ENCODE measurements at regions of chr5 and their contacts with region 1.

Region 1: GRCh38 chr5:157743163-157744050 is at the start of gene LSM11:
- DNase-seq: peak; percentile 87 to 94
- H3K4me3 ChIP-seq: peak within 1 kb of the TSS; percentile 91
- H3K4me3 Mint-ChIP-seq: peak within 1 kb of the TSS; percentile 83
- H3K27ac Mint-ChIP-seq: peak within 1 kb of the TSS; percentile 52
- H3K4me1 ChIP-seq: 0 out of 2 replicates have a peak, but pooled peaks cover 6% of the 10 kb centered on the region
- H3K4me1 Mint-ChIP-seq: peaks cover 8% of the 10 kb centered on the region
- H3K27me3 ChIP-seq: no peaks in the 10 kb centered on the region
- H3K27me3 Mint-ChIP-seq: no peaks in the 10 kb centered on the region
- CTCF ChIP-seq: peak; percentile 98 to 99
- total RNA-seq, gene LSM11: 6.8 and 7.7 TPM in 2 replicates

Region 2: DNA sequence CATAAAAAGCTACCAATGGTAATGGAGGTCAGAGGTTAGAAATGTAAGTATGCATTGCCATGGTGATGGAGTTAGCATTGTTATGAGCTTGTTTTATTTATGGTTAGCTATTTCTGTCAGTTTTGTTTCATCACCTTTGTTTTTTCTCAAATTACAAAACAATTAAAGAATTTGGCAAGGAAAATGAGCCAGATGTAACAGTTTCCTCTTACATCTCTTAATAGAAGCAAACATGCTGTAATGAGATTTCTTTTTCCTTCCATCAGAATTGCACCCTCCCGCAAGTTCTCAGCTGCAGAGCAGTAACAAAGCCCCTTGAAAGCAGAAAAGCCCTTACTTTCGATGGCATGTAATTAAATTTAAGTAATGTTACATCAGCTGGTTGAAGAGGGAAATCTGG is 1183.4 kb before region 1 on chr5:
- CTCF ChIA-PET with region 1: no interaction called
- POLR2A ChIA-PET with region 1: no interaction called
- intact Hi-C with region 1: no loop called
- DNase-seq: no peak
- H3K4me3 ChIP-seq: no peak overlapping the region
- H3K4me3 Mint-ChIP-seq: no peak overlapping the region
- H3K27ac Mint-ChIP-seq: no peak overlapping the region
- H3K4me1 ChIP-seq: no peaks in the 10 kb centered on the region
- H3K4me1 Mint-ChIP-seq: no peaks in the 10 kb centered on the region
- H3K27me3 ChIP-seq: no peaks in the 10 kb centered on the region
- H3K27me3 Mint-ChIP-seq: no peaks in the 10 kb centered on the region
- CTCF ChIP-seq: no peak

Region 3: DNA sequence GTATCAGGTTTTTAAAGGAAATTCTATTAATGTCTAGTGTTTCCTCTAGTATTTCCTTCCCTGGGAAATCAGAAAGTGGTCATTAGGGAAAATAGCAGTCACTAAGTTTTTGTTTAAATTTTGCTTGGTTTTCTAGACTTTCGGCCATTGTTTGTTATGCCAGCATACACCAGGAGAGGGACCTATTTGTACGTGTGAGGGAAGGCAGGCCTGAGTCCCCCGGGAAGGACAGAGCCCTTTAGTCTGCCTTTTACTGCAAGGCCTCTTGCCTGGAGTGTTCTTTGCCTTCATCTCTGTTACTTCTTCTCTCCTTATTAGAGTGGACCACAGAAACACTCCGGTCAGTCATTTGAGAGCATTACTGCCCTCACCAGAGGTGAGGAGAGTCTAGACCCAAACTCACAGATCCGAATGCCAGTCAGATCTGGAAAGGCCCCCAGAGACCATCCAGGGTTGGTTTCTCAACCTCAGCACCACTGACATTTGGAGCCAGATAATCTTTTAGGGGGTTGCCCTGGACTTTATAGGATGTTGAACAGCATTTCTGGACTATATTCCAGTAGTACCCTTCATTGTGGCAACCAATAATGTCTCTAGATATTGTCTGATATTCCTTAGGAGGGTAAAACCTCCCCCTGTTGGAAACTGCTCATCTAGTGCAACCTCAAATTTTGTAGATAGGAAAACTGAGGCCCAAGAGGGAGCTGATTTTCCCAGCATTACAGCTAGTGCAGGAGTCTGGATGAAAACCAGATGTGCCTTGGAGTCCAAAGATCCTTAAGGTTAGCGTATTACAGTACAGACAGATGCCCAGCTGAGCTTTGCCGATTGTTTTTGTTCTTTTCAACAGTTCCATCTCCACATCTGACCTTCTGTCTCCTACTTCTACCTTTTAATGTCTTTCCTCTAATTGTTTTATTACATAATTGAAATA is 376.4 kb before region 1 on chr5:
- CTCF ChIA-PET with region 1: no interaction called
- POLR2A ChIA-PET with region 1: no interaction called
- intact Hi-C with region 1: loop called (anchors 10 kb)
- DNase-seq: peak in 1 of 2 experiments; percentile 47
- H3K4me3 ChIP-seq: no peak overlapping the region
- H3K4me3 Mint-ChIP-seq: no peak overlapping the region
- H3K27ac Mint-ChIP-seq: no peak overlapping the region
- H3K4me1 ChIP-seq: no peaks in the 10 kb centered on the region; the same call in 1 of the 2 replicates
- H3K4me1 Mint-ChIP-seq: no peaks in the 10 kb centered on the region
- H3K27me3 ChIP-seq: no peaks in the 10 kb centered on the region
- H3K27me3 Mint-ChIP-seq: no peaks in the 10 kb centered on the region
- CTCF ChIP-seq: peak in 1 of 2 experiments; percentile 69

Region 4: GRCh38 chr5:157575381-157576020 is 167.9 kb before region 1 on chr5 and contains the start of gene ADAM19:
- CTCF ChIA-PET with region 1: no interaction called
- POLR2A ChIA-PET with region 1: no interaction called
- intact Hi-C with region 1: loop called (anchors 5 kb)
- DNase-seq: peak; percentile 62 to 80
- H3K4me3 ChIP-seq: peak within 1 kb of the TSS; percentile 75
- H3K4me3 Mint-ChIP-seq: peak within 1 kb of the TSS; percentile 92
- H3K27ac Mint-ChIP-seq: peak within 1 kb of the TSS; percentile 50
- H3K4me1 ChIP-seq: peaks cover 37% of the 10 kb centered on the region
- H3K4me1 Mint-ChIP-seq: peaks cover 48% of the 10 kb centered on the region
- H3K27me3 ChIP-seq: no peaks in the 10 kb centered on the region
- H3K27me3 Mint-ChIP-seq: no peaks in the 10 kb centered on the region
- CTCF ChIP-seq: no peak
- total RNA-seq, gene ADAM19: 62.9 and 69.4 TPM in 2 replicates

Region 5: DNA sequence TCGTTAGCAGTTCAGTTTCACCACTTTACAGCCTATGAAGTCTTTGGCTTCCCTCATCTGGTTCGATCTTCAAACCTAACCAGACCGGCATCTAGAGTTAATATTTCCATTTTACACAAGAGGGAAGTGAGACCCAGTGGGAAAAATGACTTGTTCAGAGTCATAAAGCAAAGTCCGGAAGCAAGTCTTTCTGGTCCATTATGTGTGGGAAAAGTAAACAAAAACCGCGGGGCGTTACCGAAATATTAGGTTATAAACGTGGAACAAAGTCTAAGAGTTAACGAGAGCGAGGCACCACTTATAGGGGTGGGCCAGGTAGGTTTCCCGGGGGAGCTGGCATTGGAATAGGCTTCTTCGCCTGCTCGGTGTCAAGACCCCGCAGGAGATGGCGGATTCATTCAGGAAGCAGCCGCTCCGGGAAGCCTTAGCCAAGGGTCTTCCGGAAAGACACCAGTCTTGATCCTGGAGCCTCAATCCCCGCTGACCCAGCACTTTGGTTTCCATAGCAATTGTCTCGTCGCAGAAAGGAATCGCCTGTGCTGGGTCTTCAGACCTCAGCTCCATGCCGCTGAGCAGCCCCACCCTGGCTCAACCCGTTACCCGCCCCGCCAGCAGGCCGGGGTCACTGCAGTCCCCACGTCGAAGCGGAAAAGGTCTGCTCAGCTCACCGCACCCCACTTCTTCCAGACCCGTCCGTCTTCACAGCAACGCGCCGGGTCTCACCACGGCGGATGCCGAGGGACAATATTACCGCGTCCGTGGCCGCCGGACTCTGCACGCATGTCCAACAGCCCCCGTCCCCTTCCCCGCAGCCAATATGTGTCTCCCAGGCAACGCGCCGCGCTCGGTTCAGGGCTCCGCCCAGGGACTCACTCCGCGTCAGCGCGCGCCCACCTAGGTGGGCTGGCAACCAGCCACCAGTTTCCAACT is 72.5 kb before region 1 on chr5 and contains the start of gene C5orf52:
- CTCF ChIA-PET with region 1: interaction called, 13 read pairs
- POLR2A ChIA-PET with region 1: no interaction called
- intact Hi-C with region 1: loop called (anchors 1 kb)
- DNase-seq: peak; percentile 58 to 80
- H3K4me3 ChIP-seq: peak within 1 kb of the TSS; percentile 21
- H3K4me3 Mint-ChIP-seq: peak within 1 kb of the TSS; percentile 66
- H3K27ac Mint-ChIP-seq: peak within 1 kb of the TSS; percentile 89
- H3K4me1 ChIP-seq: peaks cover 22% of the 10 kb centered on the region
- H3K4me1 Mint-ChIP-seq: peaks cover 17% of the 10 kb centered on the region
- H3K27me3 ChIP-seq: no peaks in the 10 kb centered on the region
- H3K27me3 Mint-ChIP-seq: no peaks in the 10 kb centered on the region
- CTCF ChIP-seq: no peak
- total RNA-seq, gene C5orf52: not detected in 2 replicates

Measured in Caco-2 (cell line).